ENCODE measurements at regions of chr19 and their contacts with region 1.

Region 1: DNA sequence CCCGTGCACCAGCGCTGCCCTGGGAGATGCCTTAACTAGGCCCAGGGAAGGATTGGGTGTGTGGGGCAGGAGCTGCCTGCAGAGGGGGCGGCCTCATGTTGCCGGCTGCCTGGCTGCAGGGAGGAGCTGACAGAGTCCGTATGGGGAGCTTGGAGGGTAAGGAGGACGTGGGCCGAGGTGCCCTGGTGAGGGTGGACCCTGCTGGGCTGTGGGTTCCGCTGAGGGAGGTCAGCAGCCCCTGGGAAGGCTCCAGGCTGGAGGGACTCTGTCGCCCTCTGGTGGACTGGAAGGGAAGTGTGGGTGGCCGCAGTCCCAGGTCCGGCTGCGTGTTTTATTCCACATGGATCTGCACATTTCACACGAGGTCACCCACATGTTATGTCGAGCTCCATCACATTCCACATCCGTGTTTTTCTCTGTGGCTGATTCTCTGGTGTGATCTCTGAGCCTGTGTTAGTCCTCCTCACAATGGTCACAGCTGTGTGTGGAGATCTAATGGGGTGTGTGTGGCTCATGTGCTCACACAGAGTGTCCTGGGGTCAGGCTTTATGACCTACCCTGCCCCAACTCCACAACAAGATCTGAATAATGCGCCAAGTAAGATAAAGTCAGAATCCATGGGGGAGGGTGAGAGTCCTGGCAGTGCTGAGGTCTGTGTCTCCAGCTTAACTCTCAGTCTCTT is 1.8 kb upstream of the CEACAM8 start:
- DNase-seq: no peak
- ATAC-seq: peak; percentile 86
- H3K4me3 ChIP-seq: no peak overlapping the region
- H3K27ac ChIP-seq: no peak overlapping the region
- H3K4me1 ChIP-seq: no peaks in the 10 kb centered on the region
- H3K27me3 ChIP-seq: peaks cover 0 to 4% of the 10 kb centered on the region in 2 experiments; a peak in 1 of 5 replicates
- CTCF ChIP-seq: peak; percentile 94
- EP300 ChIP-seq: no peak
- POLR2A ChIP-seq: no peak
- RAD21 ChIP-seq: peak; percentile 66

Region 2: DNA sequence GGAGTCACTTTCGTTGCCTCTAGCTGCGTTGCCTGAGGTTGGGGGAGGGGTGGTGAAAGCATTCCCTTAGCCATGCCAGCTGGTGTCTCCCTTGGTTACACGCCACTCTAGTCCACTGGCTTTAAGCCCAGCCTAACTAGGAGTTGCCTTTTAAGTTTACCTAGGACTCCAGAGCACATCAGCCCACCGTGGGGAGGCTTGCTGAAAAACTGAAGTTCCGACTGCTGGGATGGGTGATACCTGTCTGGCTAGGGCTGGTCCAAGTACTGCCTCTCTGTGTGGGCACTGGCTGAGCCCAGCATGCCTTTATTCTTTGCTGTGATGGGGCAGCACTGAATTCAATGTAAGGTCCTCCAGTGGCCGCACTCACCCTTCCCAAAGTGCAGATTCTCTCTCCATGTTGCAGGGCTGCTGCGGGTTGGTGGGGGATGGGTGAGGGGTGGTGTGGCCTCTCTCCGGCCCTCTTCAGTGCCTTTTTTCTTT is 56.4 kb before region 1 on chr19:
- CTCF ChIA-PET with region 1: no interaction called
- POLR2A ChIA-PET with region 1: no interaction called
- in situ Hi-C with region 1: no loop called
- intact Hi-C with region 1: no loop called
- DNase-seq: no peak
- ATAC-seq: peak; percentile 29
- H3K4me3 ChIP-seq: no peak overlapping the region
- H3K27ac ChIP-seq: no peak overlapping the region
- H3K4me1 ChIP-seq: peaks cover 62% of the 10 kb centered on the region
- H3K27me3 ChIP-seq: no peaks in the 10 kb centered on the region
- CTCF ChIP-seq: no peak
- EP300 ChIP-seq: no peak
- POLR2A ChIP-seq: no peak
- RAD21 ChIP-seq: no peak

Region 3: GRCh38 chr19:42563352-42564210 is 33.0 kb before region 1 on chr19:
- CTCF ChIA-PET with region 1: interaction called, 5 read pairs
- POLR2A ChIA-PET with region 1: no interaction called
- in situ Hi-C with region 1: no loop called
- intact Hi-C with region 1: loop called (anchors 1 kb)
- DNase-seq: peak; percentile 39
- ATAC-seq: peak; percentile 88
- H3K4me3 ChIP-seq: no peak overlapping the region
- H3K27ac ChIP-seq: no peak overlapping the region
- H3K4me1 ChIP-seq: peaks cover 38% of the 10 kb centered on the region
- H3K27me3 ChIP-seq: peaks cover 2 to 18% of the 10 kb centered on the region in 2 experiments; a peak in 4 of 5 replicates
- CTCF ChIP-seq: peak; percentile 77
- EP300 ChIP-seq: no peak
- POLR2A ChIP-seq: no peak
- RAD21 ChIP-seq: no peak

Region 4: DNA sequence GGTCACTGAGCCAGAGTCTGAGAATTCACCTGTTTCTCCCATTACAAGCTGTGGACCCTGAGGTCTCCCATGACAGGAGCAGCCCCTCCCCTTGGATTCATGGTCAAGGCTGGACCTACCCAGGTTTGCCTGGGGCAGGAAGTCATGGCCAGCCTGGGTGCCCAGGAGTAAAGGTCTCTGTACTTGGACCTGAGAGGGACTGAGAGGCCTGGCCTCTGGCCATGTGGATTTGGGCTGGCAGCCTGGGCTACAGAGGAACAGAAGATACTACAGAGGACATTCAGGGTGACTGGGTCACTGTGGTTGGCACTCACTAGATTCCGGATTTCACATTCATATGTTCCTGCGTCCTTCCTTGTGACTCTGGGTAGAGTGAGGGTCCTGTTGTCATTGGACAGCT is 29.6 kb after region 1 on chr19:
- CTCF ChIA-PET with region 1: no interaction called
- POLR2A ChIA-PET with region 1: no interaction called
- in situ Hi-C with region 1: no loop called
- intact Hi-C with region 1: no loop called
- DNase-seq: no peak
- ATAC-seq: no peak
- H3K4me3 ChIP-seq: no peak overlapping the region
- H3K27ac ChIP-seq: no peak overlapping the region
- H3K4me1 ChIP-seq: no peaks in the 10 kb centered on the region
- H3K27me3 ChIP-seq: peaks cover 0 to 5% of the 10 kb centered on the region in 2 experiments; a peak in 2 of 5 replicates
- CTCF ChIP-seq: no peak
- EP300 ChIP-seq: no peak
- POLR2A ChIP-seq: no peak
- RAD21 ChIP-seq: no peak

Measured in HepG2 (cell line).